Dorsolateral prefrontal cortex (tissue), 120 donors: ENCODE measurements at regions of chr6 and their contacts with region 1.

Region 1: GRCh38 chr6:148342357-148343046 is at the start of gene SASH1:
- DNase-seq: peak; percentile 12 to 80 (median 62)
- H3K4me3 ChIP-seq: peak within 1 kb of the TSS; percentile 54 to 89 (median 74)
- H3K27ac ChIP-seq: peak within 1 kb of the TSS; percentile 35 to 98 (median 95)
- H3K27me3 ChIP-seq: peaks cover 0 to 4% (median 0%) of the 10 kb centered on the region in 45 donors
- CTCF ChIP-seq: peak in 4 of 56 donors; percentile 9 to 26 (median 17)
- total RNA-seq, gene SASH1: 67.5 to 387 (median 117) TPM

Region 2: DNA sequence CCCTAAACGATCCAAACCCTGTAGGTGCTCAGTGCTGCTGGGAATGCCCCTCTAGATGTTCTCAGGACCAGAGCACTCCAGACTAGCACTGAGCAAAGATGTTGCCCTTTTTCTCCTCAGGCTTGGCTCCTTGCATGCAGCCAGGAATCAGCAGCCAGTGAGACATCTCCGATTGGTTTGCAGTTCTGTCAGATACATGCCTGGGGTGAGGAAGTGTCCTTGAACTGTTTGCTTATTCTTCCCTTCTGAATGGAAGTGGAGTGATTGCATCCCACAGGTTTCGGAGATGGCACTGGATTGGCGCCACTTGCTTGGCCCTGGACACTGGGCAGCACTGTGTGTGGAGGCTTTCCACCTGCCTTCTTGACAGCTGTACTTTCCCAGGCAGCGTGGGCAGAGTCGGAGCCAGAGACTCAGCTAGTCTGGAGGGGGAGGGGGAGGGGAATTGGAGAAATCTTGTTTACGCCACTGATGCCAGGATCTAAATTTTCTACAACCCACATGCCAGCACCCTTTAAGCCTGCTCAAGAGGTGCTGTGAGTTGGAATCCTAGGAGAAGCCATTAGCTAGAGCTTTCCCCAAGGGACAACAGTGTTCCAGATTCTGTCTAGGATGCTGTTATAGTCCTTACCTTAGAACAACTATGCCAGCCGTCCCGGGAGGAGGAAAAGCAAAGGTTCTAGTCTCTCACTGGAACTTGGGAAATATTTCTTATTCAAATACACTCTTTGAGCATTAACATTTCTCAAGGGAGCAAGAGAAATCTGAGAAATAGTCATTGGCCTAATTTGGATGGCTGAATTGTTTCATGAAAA is 49.1 kb before region 1 on chr6:
- intact Hi-C with region 1: loop called in 1 of 2 experiments (anchors 10 kb)
- DNase-seq: peak; percentile 15 to 75 (median 64)
- H3K4me3 ChIP-seq: peak overlapping the region in 1 of 59 donors; percentile 26
- H3K27ac ChIP-seq: peak overlapping the region in 58 of 59 donors; percentile 38 to 97 (median 89)
- H3K27me3 ChIP-seq: no peaks in the 10 kb centered on the region
- CTCF ChIP-seq: no peak

Region 3: DNA sequence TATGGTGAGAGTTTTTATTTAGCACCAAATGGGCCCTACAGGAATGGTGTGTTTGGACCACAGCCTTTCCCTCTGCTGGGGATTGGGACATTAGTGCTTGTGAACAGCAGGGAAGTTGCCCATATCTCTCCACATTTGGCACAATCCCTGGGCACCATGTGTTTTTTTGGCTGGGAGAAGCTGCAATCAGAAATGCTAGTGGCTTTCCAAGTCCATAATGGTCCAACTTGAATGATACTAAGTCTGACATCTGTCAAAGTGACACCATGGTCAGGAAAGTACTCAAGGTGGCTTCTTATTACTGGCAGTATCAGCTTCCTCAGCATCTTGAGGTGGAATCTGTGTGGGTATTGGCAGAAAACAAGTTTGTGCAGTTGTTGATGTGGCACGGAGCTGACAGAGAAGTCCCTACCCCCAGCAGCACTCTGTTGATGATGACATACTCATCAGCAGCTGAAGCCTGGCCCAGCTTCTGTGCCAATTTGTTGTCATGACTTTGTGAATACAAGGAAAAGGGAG is 53.1 kb after region 1 on chr6:
- intact Hi-C with region 1: loop called (anchors 2 to 10 kb)
- DNase-seq: peak in 5 of 10 donors; percentile 38 to 71 (median 51)
- H3K4me3 ChIP-seq: peak overlapping the region in 1 of 59 donors; percentile 6
- H3K27ac ChIP-seq: peak overlapping the region in 55 of 59 donors; percentile 1 to 91 (median 71)
- H3K27me3 ChIP-seq: no peaks in the 10 kb centered on the region
- CTCF ChIP-seq: no peak

Region 4: DNA sequence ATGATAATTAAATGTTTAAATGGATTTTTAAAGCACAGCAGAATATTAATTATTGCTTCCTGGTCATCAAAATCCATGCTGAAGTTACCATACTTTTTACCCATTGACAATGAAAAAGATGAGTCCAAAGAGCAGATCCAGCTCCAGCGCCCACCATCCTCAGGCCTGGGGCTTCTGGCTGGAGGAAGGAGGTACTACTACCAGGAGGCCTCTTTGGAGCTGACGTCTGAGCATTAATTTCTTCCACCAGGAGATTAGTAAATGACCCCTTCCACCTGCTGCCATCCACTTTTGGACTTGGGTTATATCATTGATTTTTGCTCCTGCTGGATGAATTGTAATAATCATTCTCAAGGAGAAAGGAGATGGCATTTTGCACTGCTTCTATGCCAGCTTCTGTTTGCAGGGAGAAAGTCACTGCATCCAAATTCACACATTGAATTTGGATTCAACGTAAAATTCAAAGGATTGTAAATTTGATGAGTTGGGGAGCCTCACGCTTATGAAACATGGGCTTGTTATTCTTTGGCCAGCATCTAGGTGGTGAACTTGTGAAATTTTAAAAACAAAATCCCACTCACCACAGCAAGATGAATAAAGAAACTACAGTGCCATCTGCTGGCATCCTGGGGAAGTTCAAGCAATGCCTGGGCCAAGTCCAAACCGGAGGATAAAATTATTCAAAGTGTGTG is 122.0 kb after region 1 on chr6:
- intact Hi-C with region 1: loop called (anchors 2 to 5 kb)
- DNase-seq: peak in 9 of 10 donors; percentile 19 to 84 (median 64)
- H3K4me3 ChIP-seq: peak overlapping the region in 2 of 59 donors; percentile 2 to 4
- H3K27ac ChIP-seq: peak overlapping the region; percentile 25 to 94 (median 84)
- H3K27me3 ChIP-seq: no peaks in the 10 kb centered on the region
- CTCF ChIP-seq: peak; percentile 89 to 100 (median 97)

Region 5: GRCh38 chr6:148538261-148539190 is 196.0 kb after region 1 on chr6:
- intact Hi-C with region 1: loop called in 1 of 2 experiments (anchors 5 kb)
- DNase-seq: no peak
- H3K4me3 ChIP-seq: peak overlapping the region in 17 of 59 donors; percentile 4 to 42 (median 22)
- H3K27ac ChIP-seq: peak overlapping the region; percentile 63 to 98 (median 93)
- H3K27me3 ChIP-seq: no peaks in the 10 kb centered on the region
- CTCF ChIP-seq: no peak

Region 6: GRCh38 chr6:148840256-148840655 is 497.8 kb after region 1 on chr6:
- intact Hi-C with region 1: no loop called
- DNase-seq: no peak
- H3K4me3 ChIP-seq: no peak overlapping the region
- H3K27ac ChIP-seq: no peak overlapping the region
- H3K27me3 ChIP-seq: no peaks in the 10 kb centered on the region
- CTCF ChIP-seq: no peak